ENCODE measurements at regions of chr5 and their contacts with region 1.

Region 1: DNA sequence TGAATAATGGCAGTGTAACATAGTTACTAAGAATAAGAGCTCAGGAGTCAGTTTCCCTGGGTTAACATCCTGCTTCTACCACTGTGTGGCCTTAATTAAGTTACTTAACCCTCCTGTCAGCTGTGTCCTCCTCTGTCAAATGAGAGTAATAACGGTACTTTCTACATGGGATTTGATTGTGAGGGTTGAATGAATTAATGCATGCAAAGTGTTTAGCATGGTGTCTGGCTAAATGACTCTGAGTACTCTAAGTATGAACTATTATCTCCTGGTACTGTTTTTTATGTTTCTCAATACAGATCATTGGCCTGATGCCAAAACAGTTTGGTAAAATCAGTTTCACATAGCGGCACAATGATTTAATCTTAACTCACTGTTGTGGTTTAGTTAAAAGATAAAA is 19.6 kb downstream of the ZNF131 start:
- DNase-seq: no peak
- H3K4me3 ChIP-seq: no peak overlapping the region
- H3K27ac ChIP-seq: no peak overlapping the region
- H3K4me1 ChIP-seq: no peaks in the 10 kb centered on the region
- H3K27me3 ChIP-seq: no peaks in the 10 kb centered on the region
- CTCF ChIP-seq: no peak
- EP300 ChIP-seq: no peak
- POLR2A ChIP-seq: no peak
- RAD21 ChIP-seq: no peak

Region 2: GRCh38 chr5:43120720-43121564 is 19.3 kb before region 1 on chr5 and contains the start of gene ZNF131:
- CTCF ChIA-PET with region 1: interaction called, 4 read pairs
- POLR2A ChIA-PET with region 1: interaction called, 13 read pairs
- DNase-seq: peak; percentile 89 to 96
- H3K4me3 ChIP-seq: peak within 1 kb of the TSS; percentile 76 to 99 (median 92)
- H3K27ac ChIP-seq: peak within 1 kb of the TSS; percentile 97
- H3K4me1 ChIP-seq: no peaks in the 10 kb centered on the region; a peak in 2 of 7 replicates
- H3K27me3 ChIP-seq: 0 out of 7 replicates have a peak, but pooled peaks cover 0 to 1% (median 0%) of the 10 kb centered on the region in 4 experiments
- CTCF ChIP-seq: no peak
- EP300 ChIP-seq: no peak
- POLR2A ChIP-seq: peak; percentile 80 to 97
- RAD21 ChIP-seq: no peak
- total RNA-seq, gene ZNF131: 34.9 and 36.3 TPM in 2 replicates

Measured in H1 (cell line).